ENCODE measurements at regions of chr7 and their contacts with region 1.

Region 1: GRCh38 chr7:73451780-73452398 is 18.3 kb downstream of the FZD9 start:
- DNase-seq: peak in 4 of 5 donors; percentile 56 to 60 (median 57)
- H3K4me3 ChIP-seq: no peak overlapping the region
- H3K4me3 Mint-ChIP-seq: no peak overlapping the region
- H3K27ac ChIP-seq: no peak overlapping the region
- H3K27ac Mint-ChIP-seq: peak overlapping the region in 2 of 7 donors; percentile 52 to 64
- H3K4me1 ChIP-seq: no peaks in the 10 kb centered on the region
- H3K4me1 Mint-ChIP-seq: peaks cover 0 to 7% (median 7%) of the 10 kb centered on the region in 4 donors
- H3K27me3 ChIP-seq: no peaks in the 10 kb centered on the region
- H3K27me3 Mint-ChIP-seq: no peaks in the 10 kb centered on the region

Region 2: GRCh38 chr7:72504061-72504706 is 947.7 kb before region 1 on chr7:
- CTCF ChIA-PET with region 1: no interaction called
- POLR2A ChIA-PET with region 1: no interaction called
- intact Hi-C with region 1: no loop called
- DNase-seq: no peak
- H3K4me3 ChIP-seq: no peak overlapping the region
- H3K4me3 Mint-ChIP-seq: no peak overlapping the region
- H3K27ac ChIP-seq: no peak overlapping the region
- H3K27ac Mint-ChIP-seq: no peak overlapping the region
- H3K4me1 ChIP-seq: no peaks in the 10 kb centered on the region
- H3K4me1 Mint-ChIP-seq: no peaks in the 10 kb centered on the region
- H3K27me3 ChIP-seq: no peaks in the 10 kb centered on the region
- H3K27me3 Mint-ChIP-seq: peaks cover 2 to 4% of the 10 kb centered on the region in 2 donors

Region 3: GRCh38 chr7:72919256-72919775 is 532.6 kb before region 1 on chr7:
- CTCF ChIA-PET with region 1: interaction called, 9 read pairs
- POLR2A ChIA-PET with region 1: no interaction called
- intact Hi-C with region 1: loop called (anchors 10 kb)
- DNase-seq: no peak
- H3K4me3 ChIP-seq: no peak overlapping the region
- H3K4me3 Mint-ChIP-seq: no peak overlapping the region
- H3K27ac ChIP-seq: no peak overlapping the region
- H3K27ac Mint-ChIP-seq: peak overlapping the region in 2 of 7 donors; percentile 40 to 57
- H3K4me1 ChIP-seq: peaks cover 6% of the 10 kb centered on the region
- H3K4me1 Mint-ChIP-seq: peaks cover 14 to 21% (median 17%) of the 10 kb centered on the region in 4 donors
- H3K27me3 ChIP-seq: no peaks in the 10 kb centered on the region
- H3K27me3 Mint-ChIP-seq: no peaks in the 10 kb centered on the region

Region 4: DNA sequence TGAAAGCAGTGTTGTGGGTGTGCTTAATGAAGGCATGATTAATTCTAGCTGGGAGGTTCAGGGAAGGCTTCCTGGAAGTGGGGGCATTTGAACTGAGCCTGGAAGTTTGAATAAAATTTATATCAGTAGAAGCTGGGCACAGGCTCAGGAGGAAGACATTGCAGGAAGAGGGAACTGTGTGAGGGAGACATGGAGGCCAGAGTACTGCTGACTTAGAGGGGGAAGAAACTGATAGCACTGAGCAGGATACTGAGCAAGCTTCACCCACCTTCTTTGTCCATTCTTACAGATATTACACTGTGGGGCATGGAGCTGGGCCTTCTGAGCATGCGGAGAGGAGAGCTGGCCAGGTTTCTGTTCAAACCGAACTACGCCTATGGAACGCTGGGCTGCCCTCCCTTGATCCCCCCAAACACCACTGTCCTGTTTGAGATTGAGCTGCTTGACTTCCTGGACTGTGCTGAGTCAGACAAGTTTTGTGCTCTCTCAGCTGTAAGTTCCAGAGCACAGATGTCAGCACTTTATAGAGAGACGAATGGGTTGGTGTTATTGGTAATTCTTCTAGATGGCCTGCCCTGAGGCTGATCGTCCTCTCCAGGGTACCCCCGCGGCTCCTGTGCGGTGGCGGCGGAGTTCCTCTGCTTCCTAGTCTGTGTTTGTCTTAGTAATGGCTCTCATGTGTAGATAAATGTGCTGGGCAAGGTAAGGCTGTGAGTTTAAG is 121.9 kb before region 1 on chr7:
- CTCF ChIA-PET with region 1: interaction called, 39 read pairs
- POLR2A ChIA-PET with region 1: no interaction called
- intact Hi-C with region 1: no loop called
- DNase-seq: no peak
- H3K4me3 ChIP-seq: no peak overlapping the region
- H3K4me3 Mint-ChIP-seq: no peak overlapping the region
- H3K27ac ChIP-seq: no peak overlapping the region
- H3K27ac Mint-ChIP-seq: no peak overlapping the region
- H3K4me1 ChIP-seq: no peaks in the 10 kb centered on the region
- H3K4me1 Mint-ChIP-seq: peaks cover 0 to 1% (median 0%) of the 10 kb centered on the region in 4 donors
- H3K27me3 ChIP-seq: no peaks in the 10 kb centered on the region
- H3K27me3 Mint-ChIP-seq: peaks cover 1 to 3% of the 10 kb centered on the region in 2 donors

Region 5: GRCh38 chr7:73463966-73464365 is 12.1 kb after region 1 on chr7:
- CTCF ChIA-PET with region 1: interaction called, 13 read pairs
- POLR2A ChIA-PET with region 1: interaction called, 3 read pairs
- intact Hi-C with region 1: no loop called
- DNase-seq: no peak
- H3K4me3 ChIP-seq: no peak overlapping the region
- H3K4me3 Mint-ChIP-seq: no peak overlapping the region
- H3K27ac ChIP-seq: no peak overlapping the region
- H3K27ac Mint-ChIP-seq: no peak overlapping the region
- H3K4me1 ChIP-seq: no peaks in the 10 kb centered on the region
- H3K4me1 Mint-ChIP-seq: peaks cover 0 to 3% (median 0%) of the 10 kb centered on the region in 4 donors
- H3K27me3 ChIP-seq: no peaks in the 10 kb centered on the region
- H3K27me3 Mint-ChIP-seq: no peaks in the 10 kb centered on the region

Region 6: GRCh38 chr7:73667344-73668102 is 215.6 kb after region 1 on chr7 and contains the start of gene VPS37D:
- CTCF ChIA-PET with region 1: no interaction called
- POLR2A ChIA-PET with region 1: no interaction called
- intact Hi-C with region 1: no loop called
- DNase-seq: peak; percentile 87 to 96 (median 91)
- H3K4me3 ChIP-seq: peak within 1 kb of the TSS in 1 of 2 donors; percentile 44
- H3K4me3 Mint-ChIP-seq: peak within 1 kb of the TSS; percentile 70 to 81 (median 76)
- H3K27ac ChIP-seq: no peak within 1 kb of the TSS
- H3K27ac Mint-ChIP-seq: peak within 1 kb of the TSS in 6 of 7 donors; percentile 48 to 70 (median 54)
- H3K4me1 ChIP-seq: peaks cover 10% of the 10 kb centered on the region
- H3K4me1 Mint-ChIP-seq: peaks cover 4 to 12% (median 7%) of the 10 kb centered on the region in 4 donors
- H3K27me3 ChIP-seq: peaks cover 13% of the 10 kb centered on the region
- H3K27me3 Mint-ChIP-seq: peaks cover 19 to 31% of the 10 kb centered on the region in 2 donors
- total RNA-seq, gene VPS37D: not detected

Measured in CD4-positive, alpha-beta memory T cell (primary cell).